Activated T-helper 1 cell treated with anti-CD3 and anti-CD28 coated beads, Interleukin-12 subunit alpha, Interleukin-12 subunit beta, Interleukin-2, Interleukin-4 antibody, amounts not matched to agents 30 ng/mL and 10 ng/mL and 1 ng/mL, durations not matched to agents 14 hours and 24 hours and 36 hours (primary cell): ENCODE measurements at regions of chr3 and their contacts with region 1.

Region 1: DNA sequence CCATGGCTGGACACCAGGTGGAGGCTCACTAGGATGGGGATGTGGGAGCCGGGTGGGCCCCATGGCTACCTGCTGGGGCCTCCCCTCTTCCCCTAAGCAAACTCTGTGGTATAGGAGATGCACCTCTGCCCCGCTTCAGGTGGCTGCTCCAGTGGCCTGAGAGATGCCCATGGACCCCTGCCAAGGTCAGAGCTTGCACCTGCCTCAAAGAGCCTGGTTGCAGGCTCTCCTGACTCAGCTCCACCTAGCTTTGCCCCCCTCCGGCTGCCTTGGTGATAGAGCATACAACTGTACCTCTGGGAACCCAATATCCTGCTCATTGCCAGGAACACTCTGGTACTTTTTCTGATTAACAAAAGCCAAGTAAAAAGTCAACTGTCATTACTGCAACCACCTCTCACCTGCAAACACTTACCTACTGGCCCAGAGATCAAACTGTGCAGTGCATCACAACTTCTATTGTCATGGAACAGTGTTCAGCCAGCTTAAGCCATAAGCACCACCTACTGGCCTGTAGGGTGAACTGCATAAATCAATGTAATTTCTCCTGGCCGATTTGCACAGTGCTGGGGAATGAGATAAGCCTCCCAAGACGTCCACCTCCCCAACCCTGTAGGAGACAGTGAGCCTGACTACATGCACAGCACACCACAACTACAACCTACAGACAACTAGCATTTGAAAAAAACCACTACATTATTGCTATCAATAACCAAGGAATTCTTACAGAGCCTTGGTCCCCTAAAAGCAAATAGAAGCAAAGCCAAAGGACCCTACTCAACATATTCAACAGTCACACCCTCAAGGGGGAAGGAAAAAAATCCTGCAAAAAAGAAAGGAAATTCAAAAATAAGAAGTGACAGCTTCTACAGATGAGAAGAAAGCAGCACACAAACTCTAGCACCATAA is 352.4 kb upstream of the ARHGEF26 start:
- DNase-seq: peak; percentile 35
- H3K4me3 Mint-ChIP-seq: no peak overlapping the region
- H3K27ac Mint-ChIP-seq: no peak overlapping the region
- H3K4me1 Mint-ChIP-seq: no peaks in the 10 kb centered on the region
- H3K27me3 Mint-ChIP-seq: peaks cover 17% of the 10 kb centered on the region

Region 2: GRCh38 chr3:153026026-153026425 is 742.8 kb before region 1 on chr3:
- intact Hi-C with region 1: loop called (anchors 1 kb)
- DNase-seq: no peak
- H3K4me3 Mint-ChIP-seq: no peak overlapping the region
- H3K27ac Mint-ChIP-seq: no peak overlapping the region
- H3K4me1 Mint-ChIP-seq: no peaks in the 10 kb centered on the region
- H3K27me3 Mint-ChIP-seq: peaks cover 4% of the 10 kb centered on the region

Region 3: DNA sequence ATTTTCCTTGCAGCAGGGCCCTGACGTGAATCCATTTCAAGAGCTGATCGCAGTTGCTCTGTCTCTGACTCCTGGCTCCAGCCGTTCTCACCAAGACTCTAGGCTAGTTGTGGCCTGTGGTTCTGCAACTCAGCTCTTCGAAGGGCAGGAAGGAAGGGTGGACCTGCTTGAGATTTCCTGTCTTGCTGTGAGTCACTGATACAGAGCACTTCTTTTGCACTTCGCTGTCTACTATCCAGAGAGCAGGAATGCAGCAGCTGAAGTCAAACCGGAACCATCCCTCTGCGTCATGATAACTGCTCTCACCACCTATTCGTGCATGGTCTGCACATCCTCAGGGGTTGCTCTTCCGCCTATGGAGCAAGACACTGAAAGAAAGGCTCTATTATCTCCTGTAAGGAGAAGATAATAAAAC is 547.1 kb before region 1 on chr3:
- intact Hi-C with region 1: loop called (anchors 5 kb)
- DNase-seq: peak; percentile 75
- H3K4me3 Mint-ChIP-seq: peak overlapping the region; percentile 72
- H3K27ac Mint-ChIP-seq: peak overlapping the region; percentile 90
- H3K4me1 Mint-ChIP-seq: peaks cover 47% of the 10 kb centered on the region
- H3K27me3 Mint-ChIP-seq: no peaks in the 10 kb centered on the region

Region 4: GRCh38 chr3:153291056-153291685 is 477.6 kb before region 1 on chr3:
- intact Hi-C with region 1: loop called (anchors 2 kb)
- DNase-seq: no peak
- H3K4me3 Mint-ChIP-seq: no peak overlapping the region
- H3K27ac Mint-ChIP-seq: no peak overlapping the region
- H3K4me1 Mint-ChIP-seq: peaks cover 41% of the 10 kb centered on the region
- H3K27me3 Mint-ChIP-seq: no peaks in the 10 kb centered on the region

Region 5: DNA sequence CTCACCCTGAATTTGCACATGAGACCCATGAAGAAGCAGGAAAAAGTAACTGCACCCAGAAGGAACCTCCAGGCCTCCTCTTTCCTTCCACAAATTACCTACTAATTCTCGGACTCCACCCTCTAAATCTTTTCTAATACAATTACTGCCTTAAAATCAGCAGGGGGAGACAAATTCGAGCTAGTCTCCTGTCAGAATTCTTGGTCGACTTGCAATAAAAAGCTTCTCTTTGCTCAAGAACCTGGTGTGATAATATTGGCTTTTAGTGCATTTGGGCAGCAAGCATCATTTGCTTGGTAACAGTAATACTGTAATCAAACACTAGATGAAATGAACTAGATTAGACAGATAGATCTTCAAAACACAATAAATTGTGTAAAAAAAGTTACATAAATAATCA is 324.9 kb before region 1 on chr3:
- intact Hi-C with region 1: loop called (anchors 1 kb)
- DNase-seq: no peak
- H3K4me3 Mint-ChIP-seq: no peak overlapping the region
- H3K27ac Mint-ChIP-seq: no peak overlapping the region
- H3K4me1 Mint-ChIP-seq: peaks cover 11% of the 10 kb centered on the region
- H3K27me3 Mint-ChIP-seq: no peaks in the 10 kb centered on the region

Region 6: DNA sequence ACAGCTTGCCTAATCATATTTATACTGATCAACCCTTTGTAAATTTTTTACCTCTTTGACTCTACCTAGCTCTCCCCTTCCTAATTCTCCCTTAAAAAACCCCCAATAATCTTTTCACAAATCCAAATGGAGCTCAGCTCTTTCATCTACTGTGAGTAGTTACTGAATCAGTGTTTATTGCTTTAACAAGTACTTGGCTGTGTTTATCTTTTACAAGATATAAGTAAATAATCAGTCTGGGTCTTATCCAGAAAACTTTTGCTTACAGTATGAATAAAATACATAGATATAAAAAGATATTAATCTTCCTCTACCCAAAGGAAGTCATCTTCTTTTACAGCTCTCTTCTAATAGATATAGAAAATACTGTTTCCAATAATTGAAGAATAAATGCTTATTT is 240.3 kb before region 1 on chr3:
- intact Hi-C with region 1: loop called (anchors 1 kb)
- DNase-seq: no peak
- H3K4me3 Mint-ChIP-seq: no peak overlapping the region
- H3K27ac Mint-ChIP-seq: no peak overlapping the region
- H3K4me1 Mint-ChIP-seq: no peaks in the 10 kb centered on the region
- H3K27me3 Mint-ChIP-seq: peaks cover 4% of the 10 kb centered on the region